CD4-positive, alpha-beta T cell (primary cell): ENCODE measurements at regions of chr19 and their contacts with region 1.

Region 1: GRCh38 chr19:48363810-48364563 is at the starts of genes SYNGR4 and TMEM143:
- DNase-seq: peak; percentile 96 to 100 (median 98)
- ATAC-seq: peak; percentile 86
- H3K4me3 ChIP-seq: peak within 1 kb of the TSS; percentile 94
- H3K4me3 Mint-ChIP-seq: peak within 1 kb of the TSS; percentile 90
- H3K27ac ChIP-seq: peak within 1 kb of the TSS; percentile 77 to 87
- H3K27ac Mint-ChIP-seq: peak within 1 kb of the TSS; percentile 90
- H3K4me1 ChIP-seq: peaks cover 22% of the 10 kb centered on the region
- H3K4me1 Mint-ChIP-seq: peaks cover 17% of the 10 kb centered on the region
- H3K27me3 ChIP-seq: no peaks in the 10 kb centered on the region
- H3K27me3 Mint-ChIP-seq: no peaks in the 10 kb centered on the region
- CTCF ChIP-seq: no peak
- total RNA-seq, gene SYNGR4: not detected
- total RNA-seq, gene TMEM143: 9.4 to 11.0 TPM

Region 2: DNA sequence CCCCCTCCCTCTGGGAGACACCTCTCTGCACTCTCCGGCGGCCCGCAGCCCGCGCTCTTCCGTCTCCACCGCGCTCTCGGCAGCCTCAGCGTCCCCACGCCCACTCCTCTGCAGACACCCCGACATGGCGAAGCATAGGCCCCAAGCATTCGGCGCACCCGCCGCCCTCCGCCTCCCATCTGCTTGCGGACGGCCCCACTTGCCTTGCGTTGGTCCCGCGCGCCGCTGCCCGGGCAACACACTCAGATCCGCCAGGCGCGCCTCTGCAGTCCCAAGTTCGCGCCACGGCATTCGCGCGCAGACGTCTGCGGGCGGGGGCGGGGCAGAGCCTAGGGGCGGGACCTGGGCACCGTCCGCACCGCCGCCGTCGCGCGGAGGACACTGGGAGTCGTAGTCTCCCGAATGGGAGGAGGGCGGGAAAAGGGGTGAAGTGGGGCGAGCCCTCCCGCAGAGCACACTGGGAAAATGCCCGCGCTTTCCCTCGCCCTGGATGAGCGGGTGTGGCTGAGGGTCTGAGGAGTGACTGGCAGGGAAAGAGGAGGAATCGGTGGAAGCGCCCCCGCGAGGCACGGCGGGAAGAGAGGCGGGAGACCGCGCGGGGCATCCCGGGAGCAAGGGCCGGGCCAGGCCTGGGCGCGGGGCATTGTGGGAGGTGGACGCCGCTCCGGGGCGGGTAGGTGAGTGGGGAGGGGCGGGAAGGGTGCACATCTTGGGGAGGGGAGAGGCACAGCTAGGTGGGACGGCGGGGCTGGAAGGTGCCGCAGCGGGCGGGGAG is 193.8 kb before region 1 on chr19 and contains the starts of genes LIG1 and ZSWIM9:
- CTCF ChIA-PET with region 1: no interaction called
- POLR2A ChIA-PET with region 1: no interaction called
- intact Hi-C with region 1: loop called in 1 of 2 experiments (anchors 1 kb)
- DNase-seq: peak; percentile 82 to 96 (median 88)
- ATAC-seq: peak; percentile 81
- H3K4me3 ChIP-seq: peak within 1 kb of the TSS; percentile 88
- H3K4me3 Mint-ChIP-seq: peak within 1 kb of the TSS; percentile 97
- H3K27ac ChIP-seq: peak within 1 kb of the TSS; percentile 91 to 92
- H3K27ac Mint-ChIP-seq: peak within 1 kb of the TSS; percentile 98
- H3K4me1 ChIP-seq: peaks cover 16% of the 10 kb centered on the region
- H3K4me1 Mint-ChIP-seq: peaks cover 39% of the 10 kb centered on the region
- H3K27me3 ChIP-seq: no peaks in the 10 kb centered on the region
- H3K27me3 Mint-ChIP-seq: no peaks in the 10 kb centered on the region
- CTCF ChIP-seq: no peak
- total RNA-seq, gene LIG1: 62.8 to 70.7 TPM
- total RNA-seq, gene ZSWIM9: 2.5 to 3.1 TPM

Region 3: DNA sequence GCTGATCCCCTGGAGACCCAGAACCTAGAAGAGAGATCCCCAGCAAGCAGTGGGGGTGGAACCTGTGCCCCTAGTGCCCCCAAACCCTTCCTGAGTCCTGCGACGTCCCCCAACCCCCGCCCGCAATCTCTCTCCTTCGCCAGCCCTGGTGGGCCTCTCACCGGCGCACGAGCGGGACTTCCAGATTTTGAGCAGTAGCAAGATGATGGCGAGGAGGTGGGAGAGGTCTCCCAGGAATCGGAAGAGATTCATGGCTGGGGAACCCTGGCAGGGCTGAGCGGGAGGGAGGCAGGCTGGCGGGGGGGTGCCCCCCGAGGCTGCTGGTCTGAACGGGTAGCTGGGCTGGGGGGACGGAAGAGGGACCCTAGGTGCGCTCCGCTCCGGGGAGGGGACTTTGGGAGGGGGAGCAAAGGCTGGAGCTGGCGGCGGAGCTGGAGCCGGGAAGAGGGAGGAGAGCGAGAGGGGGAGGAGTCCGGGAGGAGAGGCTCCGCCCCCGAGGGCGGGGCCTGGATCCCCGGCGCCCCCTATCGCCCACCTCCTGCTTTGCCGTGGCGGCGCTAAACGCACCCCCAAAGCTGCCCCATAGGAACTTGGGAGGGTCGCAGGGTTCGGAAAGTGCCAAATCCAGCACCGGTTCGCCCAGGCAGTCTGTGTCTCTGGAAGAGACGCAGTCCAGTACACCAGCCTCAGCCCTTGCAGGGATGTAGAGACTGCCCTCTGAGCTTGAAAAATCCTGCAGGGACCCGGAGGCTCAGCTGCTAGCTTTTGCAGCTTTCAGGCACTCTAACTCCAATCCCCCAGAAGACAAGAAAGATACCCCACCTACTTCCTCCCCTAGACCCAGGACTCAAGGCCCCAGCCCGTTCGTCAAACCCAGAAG is 27.4 kb after region 1 on chr19 and contains the start of gene KDELR1:
- CTCF ChIA-PET with region 1: interaction called, 27 read pairs
- POLR2A ChIA-PET with region 1: interaction called, 31 read pairs
- intact Hi-C with region 1: loop called (anchors 2 to 5 kb)
- DNase-seq: peak; percentile 56 to 85 (median 69)
- ATAC-seq: peak; percentile 79
- H3K4me3 ChIP-seq: peak within 1 kb of the TSS; percentile 89
- H3K4me3 Mint-ChIP-seq: peak within 1 kb of the TSS; percentile 94
- H3K27ac ChIP-seq: peak within 1 kb of the TSS; percentile 71 to 79
- H3K27ac Mint-ChIP-seq: peak within 1 kb of the TSS; percentile 93
- H3K4me1 ChIP-seq: peaks cover 57% of the 10 kb centered on the region
- H3K4me1 Mint-ChIP-seq: peaks cover 34% of the 10 kb centered on the region
- H3K27me3 ChIP-seq: peaks cover 31% of the 10 kb centered on the region in 2 experiments
- H3K27me3 Mint-ChIP-seq: peaks cover 29% of the 10 kb centered on the region
- CTCF ChIP-seq: peak; percentile 93
- total RNA-seq, gene KDELR1: 32.2 to 39.6 TPM

Region 4: DNA sequence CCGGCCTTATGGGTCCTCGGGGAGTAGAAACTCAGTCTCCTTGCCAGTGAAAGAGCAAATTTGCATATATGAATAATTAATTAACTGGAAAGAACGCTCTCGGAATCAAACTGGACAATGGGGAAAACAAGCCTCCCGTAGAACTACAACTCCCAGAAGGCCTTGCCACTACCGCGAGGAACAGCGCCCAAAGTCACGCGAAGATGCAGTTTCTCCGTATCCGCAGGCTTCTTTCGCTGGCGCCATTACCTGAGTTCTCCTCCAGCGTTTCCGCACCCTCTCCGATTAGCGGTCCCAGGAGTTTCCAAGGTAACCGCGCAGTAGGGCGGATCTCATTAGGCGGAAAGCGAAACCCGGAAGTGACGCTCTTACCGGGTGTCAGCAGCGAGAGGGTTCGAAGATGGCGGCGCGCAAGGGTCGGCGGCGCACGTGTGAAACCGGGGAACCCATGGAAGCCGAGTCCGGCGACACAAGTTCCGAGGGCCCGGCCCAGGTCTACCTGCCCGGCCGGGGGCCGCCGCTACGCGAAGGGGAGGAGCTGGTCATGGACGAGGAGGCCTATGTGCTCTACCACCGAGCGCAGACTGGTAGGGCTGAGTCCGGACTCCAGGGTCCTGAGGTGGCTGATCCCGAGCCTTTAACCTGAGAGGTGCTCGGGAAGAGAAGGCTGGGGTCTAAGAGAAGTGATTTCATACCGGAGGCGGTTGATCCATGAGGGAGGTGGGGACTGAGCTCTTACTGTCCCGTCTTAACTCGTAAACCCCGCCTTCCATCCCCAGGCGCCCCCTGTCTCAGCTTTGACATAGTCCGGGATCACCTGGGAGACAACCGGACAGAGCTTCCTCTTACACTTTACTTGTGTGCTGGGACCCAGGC is 81.9 kb after region 1 on chr19 and contains the start of gene GRWD1:
- CTCF ChIA-PET with region 1: interaction called, 3 read pairs
- POLR2A ChIA-PET with region 1: no interaction called
- intact Hi-C with region 1: loop called in 1 of 2 experiments (anchors 2 kb)
- DNase-seq: peak; percentile 85 to 99 (median 91)
- ATAC-seq: peak; percentile 94
- H3K4me3 ChIP-seq: peak within 1 kb of the TSS; percentile 85
- H3K4me3 Mint-ChIP-seq: peak within 1 kb of the TSS; percentile 93
- H3K27ac ChIP-seq: peak within 1 kb of the TSS; percentile 58 to 74
- H3K27ac Mint-ChIP-seq: peak within 1 kb of the TSS; percentile 78
- H3K4me1 ChIP-seq: peaks cover 31% of the 10 kb centered on the region
- H3K4me1 Mint-ChIP-seq: peaks cover 25% of the 10 kb centered on the region
- H3K27me3 ChIP-seq: peaks cover 15 to 25% of the 10 kb centered on the region in 2 experiments
- H3K27me3 Mint-ChIP-seq: peaks cover 28% of the 10 kb centered on the region
- CTCF ChIP-seq: no peak
- total RNA-seq, gene GRWD1: 21.4 to 21.7 TPM

Region 5: DNA sequence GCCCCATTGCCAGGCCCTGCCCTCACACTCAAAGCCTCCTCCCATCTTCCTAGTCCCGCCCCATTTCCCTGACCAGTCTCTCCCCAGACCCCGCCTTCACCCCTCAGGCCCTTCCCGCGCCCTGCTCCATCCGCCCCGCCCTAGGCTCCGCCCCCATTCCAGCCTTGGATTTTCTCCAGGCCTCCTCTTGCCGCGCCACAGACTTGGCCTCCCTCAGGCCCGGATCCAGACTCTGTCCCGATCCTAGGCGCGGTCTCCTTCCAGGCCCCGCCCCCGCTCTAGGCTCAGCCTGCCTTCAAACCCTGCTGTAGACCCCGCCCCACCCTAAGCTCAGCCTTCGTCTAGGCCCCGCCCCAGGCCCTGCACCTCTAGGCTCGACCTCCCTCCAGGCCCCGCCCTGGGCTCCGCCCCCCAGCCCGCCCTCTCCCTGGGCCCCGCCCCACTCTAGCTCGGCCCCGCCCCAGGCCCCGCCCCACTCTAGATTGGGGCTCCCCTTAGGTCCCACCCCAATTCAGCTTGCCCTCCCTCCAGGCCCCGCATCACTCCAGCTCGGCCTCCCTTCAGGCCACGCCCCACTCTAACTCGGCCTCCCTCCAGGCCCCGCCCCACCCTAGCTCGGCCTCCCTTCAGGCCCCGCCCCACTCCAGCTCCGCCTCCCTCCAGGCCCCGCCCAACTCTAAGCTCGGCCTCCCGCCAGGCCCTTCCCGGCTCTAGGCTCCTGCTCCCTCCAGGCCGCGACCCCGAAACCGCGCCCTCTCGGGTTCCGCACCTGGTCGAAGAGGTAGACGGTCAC is 129.1 kb after region 1 on chr19:
- CTCF ChIA-PET with region 1: no interaction called
- POLR2A ChIA-PET with region 1: no interaction called
- intact Hi-C with region 1: loop called in 1 of 2 experiments (anchors 5 kb)
- DNase-seq: peak; percentile 61 to 92 (median 78)
- ATAC-seq: peak; percentile 76
- H3K4me3 ChIP-seq: peak overlapping the region; percentile 50
- H3K4me3 Mint-ChIP-seq: peak overlapping the region; percentile 83
- H3K27ac ChIP-seq: no peak overlapping the region
- H3K27ac Mint-ChIP-seq: peak overlapping the region; percentile 52
- H3K4me1 ChIP-seq: peaks cover 60% of the 10 kb centered on the region
- H3K4me1 Mint-ChIP-seq: peaks cover 49% of the 10 kb centered on the region
- H3K27me3 ChIP-seq: peaks cover 0 to 40% of the 10 kb centered on the region in 2 experiments
- H3K27me3 Mint-ChIP-seq: peaks cover 53% of the 10 kb centered on the region
- CTCF ChIP-seq: no peak